Heart right ventricle (tissue), 16 donors: ENCODE measurements at regions of chr1 and their contacts with region 1.

Region 1: DNA sequence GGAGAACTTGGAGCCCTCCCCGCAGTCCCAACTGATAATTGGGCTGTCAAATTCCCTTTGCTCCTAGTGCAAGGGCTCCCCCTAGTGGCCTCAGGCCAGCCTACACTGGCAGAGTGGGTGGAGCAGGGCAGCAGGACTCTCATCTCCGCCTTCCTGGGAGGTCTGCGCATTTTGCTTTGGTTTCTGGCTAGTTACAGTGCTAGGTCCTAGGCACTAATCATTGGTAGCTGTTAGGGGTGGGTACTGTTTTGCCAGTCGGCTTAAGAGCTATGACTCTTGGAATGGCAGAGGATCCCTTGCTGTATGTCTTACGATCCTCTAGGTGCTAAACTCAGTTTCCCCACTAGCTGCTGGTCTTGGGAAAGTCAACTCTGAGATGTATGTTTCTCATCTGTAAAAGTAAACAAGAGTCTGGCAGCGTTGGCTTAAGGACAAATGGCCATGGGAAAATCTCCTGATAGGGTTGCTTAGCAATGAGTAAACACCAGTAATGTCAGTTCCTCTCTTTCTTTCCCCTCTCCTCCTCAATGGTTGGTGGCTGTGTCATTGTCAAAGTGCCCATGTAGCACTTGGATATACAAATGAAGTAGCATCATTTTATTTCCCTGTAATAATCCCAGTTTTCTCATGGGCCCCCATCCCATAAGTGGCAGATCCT is 2.1 kb upstream of the FYB2 start:
- DNase-seq: peak; percentile 79
- ATAC-seq: peak; percentile 57 to 79 (median 70)
- H3K4me3 ChIP-seq: no peak overlapping the region
- H3K27ac ChIP-seq: no peak overlapping the region
- H3K4me1 ChIP-seq: peaks cover 0 to 32% (median 9%) of the 10 kb centered on the region in 9 donors
- H3K27me3 ChIP-seq: peaks cover 0 to 3% (median 0%) of the 10 kb centered on the region in 7 donors
- CTCF ChIP-seq: peak; percentile 85 to 95 (median 92)

Region 2: DNA sequence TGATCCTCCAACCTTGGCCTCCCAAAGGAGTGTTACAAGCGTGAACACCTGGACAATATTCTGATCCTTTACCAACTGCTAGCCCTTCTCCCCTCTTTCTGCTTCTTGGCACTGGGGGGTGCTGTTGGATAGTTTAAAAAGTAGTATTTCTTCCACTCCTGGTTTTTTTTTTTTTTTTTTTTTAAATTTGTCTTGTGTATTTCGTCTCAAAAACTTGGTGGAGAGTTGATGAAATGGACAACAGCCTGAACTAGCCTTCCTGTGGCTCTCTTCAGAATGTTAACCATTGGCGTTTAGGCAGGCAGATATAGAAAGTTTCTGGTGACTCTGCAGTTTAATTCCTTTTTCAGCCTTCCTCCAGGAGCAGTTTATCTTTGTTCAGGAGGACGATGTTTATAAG is 1536.4 kb before region 1 on chr1:
- intact Hi-C with region 1: loop called in 4 of 10 experiments (anchors 10 kb)
- DNase-seq: peak in 1 of 2 donors; percentile 62
- ATAC-seq: peak; percentile 55 to 77 (median 70)
- H3K4me3 ChIP-seq: no peak overlapping the region
- H3K27ac ChIP-seq: no peak overlapping the region
- H3K4me1 ChIP-seq: peaks cover 0 to 6% (median 0%) of the 10 kb centered on the region in 9 donors
- H3K27me3 ChIP-seq: no peaks in the 10 kb centered on the region
- CTCF ChIP-seq: peak; percentile 20 to 82 (median 72)

Region 3: GRCh38 chr1:56249234-56249633 is 572.0 kb before region 1 on chr1:
- intact Hi-C with region 1: no loop called
- DNase-seq: peak in 1 of 2 donors; percentile 19
- ATAC-seq: peak in 5 of 8 donors; percentile 34 to 76 (median 51)
- H3K4me3 ChIP-seq: no peak overlapping the region
- H3K27ac ChIP-seq: peak overlapping the region in 1 of 10 donors; percentile 19
- H3K4me1 ChIP-seq: peaks cover 0 to 17% (median 5%) of the 10 kb centered on the region in 9 donors
- H3K27me3 ChIP-seq: no peaks in the 10 kb centered on the region
- CTCF ChIP-seq: no peak

Region 4: GRCh38 chr1:56644919-56645676 is 176.2 kb before region 1 on chr1 and contains the start of gene PRKAA2:
- intact Hi-C with region 1: loop called in 2 of 10 experiments (anchors 10 kb)
- DNase-seq: peak; percentile 23 to 63
- ATAC-seq: peak; percentile 67 to 94 (median 83)
- H3K4me3 ChIP-seq: peak within 1 kb of the TSS; percentile 11 to 80 (median 62)
- H3K27ac ChIP-seq: peak within 1 kb of the TSS; percentile 76 to 91 (median 88)
- H3K4me1 ChIP-seq: peaks cover 0 to 13% (median 9%) of the 10 kb centered on the region in 9 donors
- H3K27me3 ChIP-seq: peaks cover 0 to 60% (median 0%) of the 10 kb centered on the region in 7 donors
- CTCF ChIP-seq: peak in 1 of 9 donors; percentile 4
- total RNA-seq, gene PRKAA2: 71.8 to 166 (median 143) TPM

Region 5: GRCh38 chr1:56709269-56709880 is 111.9 kb before region 1 on chr1:
- intact Hi-C with region 1: loop called in 1 of 10 experiments (anchors 10 kb)
- DNase-seq: no peak
- ATAC-seq: peak; percentile 38 to 78 (median 58)
- H3K4me3 ChIP-seq: no peak overlapping the region
- H3K27ac ChIP-seq: peak overlapping the region in 1 of 10 donors; percentile 2
- H3K4me1 ChIP-seq: peaks cover 0 to 36% (median 4%) of the 10 kb centered on the region in 9 donors
- H3K27me3 ChIP-seq: no peaks in the 10 kb centered on the region
- CTCF ChIP-seq: peak; percentile 28 to 73 (median 60)

Region 6: DNA sequence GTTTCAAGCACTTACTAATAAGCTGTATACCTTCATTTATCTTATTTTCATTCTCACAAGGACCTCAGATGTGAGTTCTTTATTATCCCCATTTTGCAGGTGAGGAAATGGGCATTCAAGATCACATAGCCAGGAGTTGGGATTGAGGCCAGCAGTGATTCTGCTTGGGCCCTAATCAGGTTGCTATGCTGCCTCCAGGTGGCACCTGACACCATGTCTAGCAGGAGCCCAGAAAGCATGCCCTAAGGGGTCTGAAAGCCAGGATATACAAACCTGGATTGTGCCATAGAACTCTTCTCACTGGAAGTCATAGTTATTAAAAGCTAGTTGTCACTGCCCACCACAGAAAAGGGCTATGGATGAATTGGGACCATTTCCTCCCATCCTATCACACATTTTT is 63.1 kb before region 1 on chr1:
- intact Hi-C with region 1: loop called in 4 of 10 experiments (anchors 1 to 5 kb)
- DNase-seq: peak; percentile 5 to 14
- ATAC-seq: peak in 5 of 8 donors; percentile 38 to 74 (median 67)
- H3K4me3 ChIP-seq: no peak overlapping the region
- H3K27ac ChIP-seq: no peak overlapping the region
- H3K4me1 ChIP-seq: peaks cover 0 to 5% (median 0%) of the 10 kb centered on the region in 9 donors
- H3K27me3 ChIP-seq: peaks cover 0 to 4% (median 0%) of the 10 kb centered on the region in 7 donors
- CTCF ChIP-seq: peak in 6 of 9 donors; percentile 10 to 50 (median 40)

Region 7: DNA sequence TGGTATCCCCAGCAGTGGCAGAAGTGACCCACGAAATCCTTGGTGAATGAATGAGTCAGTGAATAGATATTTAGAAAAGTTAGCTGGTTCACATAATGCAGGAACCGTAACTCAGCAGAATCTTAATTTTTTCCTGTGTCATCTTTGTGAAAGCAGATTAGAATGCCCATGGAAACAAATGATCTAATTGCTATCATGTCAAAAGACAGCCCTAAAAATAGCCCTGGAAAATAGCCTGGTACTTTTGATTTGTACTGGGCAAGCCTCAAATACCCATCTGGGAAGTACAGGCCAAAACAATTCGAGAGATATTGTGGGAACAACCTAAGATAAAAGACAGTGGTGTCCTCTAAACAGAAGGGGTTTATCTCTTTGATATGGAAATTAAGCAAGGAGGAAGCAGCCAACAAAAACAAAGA is 23.2 kb before region 1 on chr1:
- intact Hi-C with region 1: loop called in 1 of 10 experiments (anchors 2 kb)
- DNase-seq: peak in 1 of 2 donors; percentile 15
- ATAC-seq: peak; percentile 43 to 90 (median 80)
- H3K4me3 ChIP-seq: no peak overlapping the region
- H3K27ac ChIP-seq: peak overlapping the region; percentile 46 to 88 (median 83)
- H3K4me1 ChIP-seq: peaks cover 0 to 47% (median 7%) of the 10 kb centered on the region in 9 donors
- H3K27me3 ChIP-seq: no peaks in the 10 kb centered on the region
- CTCF ChIP-seq: no peak

Region 8: GRCh38 chr1:58047265-58047858 is 1226.1 kb after region 1 on chr1:
- intact Hi-C with region 1: loop called in 1 of 10 experiments (anchors 10 kb)
- DNase-seq: peak; percentile 9 to 27
- ATAC-seq: peak in 2 of 8 donors; percentile 50 to 53
- H3K4me3 ChIP-seq: no peak overlapping the region
- H3K27ac ChIP-seq: no peak overlapping the region
- H3K4me1 ChIP-seq: no peaks in the 10 kb centered on the region
- H3K27me3 ChIP-seq: no peaks in the 10 kb centered on the region
- CTCF ChIP-seq: peak; percentile 22 to 76 (median 68)